Naive thymus-derived CD4-positive, alpha-beta T cell (primary cell): ENCODE measurements at regions of chr1 and their contacts with region 1.

Region 1: GRCh38 chr1:109112652-109113285 is 1.1 kb upstream of the ELAPOR1 start:
- DNase-seq: peak; percentile 75 to 93 (median 85)
- ATAC-seq: peak; percentile 75
- H3K4me3 ChIP-seq: peak overlapping the region; percentile 68
- H3K4me3 Mint-ChIP-seq: peak overlapping the region; percentile 78 to 93 (median 88)
- H3K27ac ChIP-seq: peak overlapping the region; percentile 68
- H3K27ac Mint-ChIP-seq: peak overlapping the region; percentile 84 to 96 (median 92)
- H3K4me1 ChIP-seq: peaks cover 16 to 21% of the 10 kb centered on the region in 2 donors
- H3K4me1 Mint-ChIP-seq: peaks cover 23 to 40% (median 28%) of the 10 kb centered on the region in 7 donors
- H3K27me3 ChIP-seq: no peaks in the 10 kb centered on the region
- H3K27me3 Mint-ChIP-seq: peaks cover 0 to 41% (median 0%) of the 10 kb centered on the region in 5 donors

Region 2: DNA sequence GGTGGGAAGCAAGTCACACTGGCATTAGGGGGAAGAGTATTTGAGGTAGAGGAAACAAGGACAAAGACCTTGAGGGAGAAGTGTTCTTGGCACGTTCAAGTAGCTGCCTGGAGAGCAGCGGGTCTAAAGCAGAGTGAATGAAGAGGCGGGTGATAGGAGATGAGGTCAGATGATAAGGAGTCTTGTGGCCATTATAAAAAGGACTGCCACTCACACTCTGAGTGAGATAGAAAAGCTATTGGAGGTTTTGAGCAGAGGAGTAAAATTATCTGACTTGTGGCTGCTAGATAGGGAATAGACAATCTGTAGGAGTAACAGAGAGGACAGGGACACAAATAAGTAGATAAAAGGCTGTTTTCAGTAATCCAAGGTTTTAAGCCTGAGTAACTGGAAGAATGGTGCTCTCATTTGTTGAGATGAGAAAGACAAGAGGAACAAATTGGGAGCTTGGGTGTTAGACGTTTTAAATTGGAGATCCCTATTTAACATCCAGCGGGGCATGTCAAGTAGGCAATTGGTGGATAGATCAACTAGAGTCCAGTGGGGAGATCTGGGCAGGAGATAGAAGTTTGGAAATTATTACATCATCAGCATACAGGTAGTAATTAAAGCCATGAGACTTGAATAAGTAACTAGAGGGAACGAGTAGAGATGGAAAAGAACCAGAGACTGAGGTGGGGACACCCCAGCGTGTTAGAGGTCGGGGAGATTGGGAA is 495.6 kb before region 1 on chr1:
- CTCF ChIA-PET with region 1: no interaction called
- POLR2A ChIA-PET with region 1: no interaction called
- intact Hi-C with region 1: no loop called
- DNase-seq: no peak
- ATAC-seq: no peak
- H3K4me3 ChIP-seq: no peak overlapping the region
- H3K4me3 Mint-ChIP-seq: no peak overlapping the region
- H3K27ac ChIP-seq: no peak overlapping the region
- H3K27ac Mint-ChIP-seq: no peak overlapping the region
- H3K4me1 ChIP-seq: no peaks in the 10 kb centered on the region
- H3K4me1 Mint-ChIP-seq: no peaks in the 10 kb centered on the region
- H3K27me3 ChIP-seq: no peaks in the 10 kb centered on the region
- H3K27me3 Mint-ChIP-seq: no peaks in the 10 kb centered on the region

Region 3: GRCh38 chr1:108828022-108828961 is 284.5 kb before region 1 on chr1:
- CTCF ChIA-PET with region 1: interaction called, 32 read pairs
- POLR2A ChIA-PET with region 1: interaction called, 3 read pairs
- intact Hi-C with region 1: loop called in 1 of 2 experiments (anchors 1 kb)
- DNase-seq: peak; percentile 37 to 62 (median 46)
- ATAC-seq: peak; percentile 61
- H3K4me3 ChIP-seq: no peak overlapping the region
- H3K4me3 Mint-ChIP-seq: no peak overlapping the region
- H3K27ac ChIP-seq: no peak overlapping the region
- H3K27ac Mint-ChIP-seq: no peak overlapping the region
- H3K4me1 ChIP-seq: no peaks in the 10 kb centered on the region
- H3K4me1 Mint-ChIP-seq: peaks cover 0 to 9% (median 0%) of the 10 kb centered on the region in 7 donors
- H3K27me3 ChIP-seq: peaks cover 0 to 3% of the 10 kb centered on the region in 2 donors
- H3K27me3 Mint-ChIP-seq: peaks cover 0 to 12% (median 0%) of the 10 kb centered on the region in 5 donors

Region 4: DNA sequence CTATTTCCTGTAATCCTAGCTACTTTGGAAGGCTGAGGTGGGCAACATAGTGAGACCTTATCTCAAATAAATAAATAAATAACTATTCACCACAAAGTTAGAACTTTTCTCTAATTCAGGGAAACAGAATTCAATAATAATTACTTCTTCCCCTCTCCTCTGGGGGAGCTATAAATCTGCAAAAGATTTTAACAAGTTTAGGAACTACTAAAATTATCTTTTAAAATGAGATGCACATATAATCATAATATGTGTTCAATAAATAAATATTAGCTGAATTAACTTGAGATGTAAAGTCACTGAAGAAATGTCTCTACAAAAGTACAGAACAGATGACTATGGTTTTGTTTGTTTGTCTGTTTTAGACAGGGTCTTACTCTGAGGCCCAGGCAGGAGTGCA is 84.9 kb before region 1 on chr1:
- CTCF ChIA-PET with region 1: interaction called, 7 read pairs
- POLR2A ChIA-PET with region 1: no interaction called
- intact Hi-C with region 1: loop called in 1 of 2 experiments (anchors 2 kb)
- DNase-seq: peak in 1 of 9 donors; percentile 14
- ATAC-seq: no peak
- H3K4me3 ChIP-seq: no peak overlapping the region
- H3K4me3 Mint-ChIP-seq: no peak overlapping the region
- H3K27ac ChIP-seq: no peak overlapping the region
- H3K27ac Mint-ChIP-seq: no peak overlapping the region
- H3K4me1 ChIP-seq: no peaks in the 10 kb centered on the region
- H3K4me1 Mint-ChIP-seq: peaks cover 0 to 4% (median 0%) of the 10 kb centered on the region in 7 donors
- H3K27me3 ChIP-seq: no peaks in the 10 kb centered on the region
- H3K27me3 Mint-ChIP-seq: no peaks in the 10 kb centered on the region

Region 5: GRCh38 chr1:109075531-109076490 is 37.0 kb before region 1 on chr1 and contains the start of gene TAF13:
- CTCF ChIA-PET with region 1: no interaction called
- POLR2A ChIA-PET with region 1: interaction called, 6 read pairs
- intact Hi-C with region 1: loop called (anchors 1 kb)
- DNase-seq: peak; percentile 75 to 89 (median 84)
- ATAC-seq: peak; percentile 100
- H3K4me3 ChIP-seq: peak within 1 kb of the TSS; percentile 80
- H3K4me3 Mint-ChIP-seq: peak within 1 kb of the TSS; percentile 89 to 99 (median 98)
- H3K27ac ChIP-seq: peak within 1 kb of the TSS; percentile 92
- H3K27ac Mint-ChIP-seq: peak within 1 kb of the TSS; percentile 95 to 100 (median 99)
- H3K4me1 ChIP-seq: peaks cover 5 to 8% of the 10 kb centered on the region in 2 donors
- H3K4me1 Mint-ChIP-seq: peaks cover 13 to 28% (median 20%) of the 10 kb centered on the region in 7 donors
- H3K27me3 ChIP-seq: no peaks in the 10 kb centered on the region
- H3K27me3 Mint-ChIP-seq: no peaks in the 10 kb centered on the region
- total RNA-seq, gene TAF13: 11.0 to 23.6 (median 17.6) TPM

Region 6: GRCh38 chr1:109099938-109100773 is 12.6 kb before region 1 on chr1:
- CTCF ChIA-PET with region 1: interaction called, 39 read pairs
- POLR2A ChIA-PET with region 1: interaction called, 89 read pairs
- intact Hi-C with region 1: loop called (anchors 1 kb)
- DNase-seq: peak; percentile 90 to 98 (median 97)
- ATAC-seq: peak; percentile 98
- H3K4me3 ChIP-seq: peak overlapping the region; percentile 80
- H3K4me3 Mint-ChIP-seq: peak overlapping the region; percentile 93 to 99 (median 98)
- H3K27ac ChIP-seq: peak overlapping the region; percentile 88
- H3K27ac Mint-ChIP-seq: peak overlapping the region; percentile 92 to 99 (median 96)
- H3K4me1 ChIP-seq: peaks cover 0 to 5% of the 10 kb centered on the region in 2 donors
- H3K4me1 Mint-ChIP-seq: peaks cover 5 to 22% (median 13%) of the 10 kb centered on the region in 7 donors
- H3K27me3 ChIP-seq: no peaks in the 10 kb centered on the region
- H3K27me3 Mint-ChIP-seq: peaks cover 0 to 2% (median 0%) of the 10 kb centered on the region in 5 donors

Region 7: GRCh38 chr1:109193653-109194590 is 81.2 kb after region 1 on chr1:
- CTCF ChIA-PET with region 1: interaction called, 4 read pairs
- POLR2A ChIA-PET with region 1: no interaction called
- intact Hi-C with region 1: loop called (anchors 1 to 5 kb)
- DNase-seq: peak in 7 of 9 donors; percentile 25 to 68 (median 42)
- ATAC-seq: peak; percentile 81
- H3K4me3 ChIP-seq: no peak overlapping the region
- H3K4me3 Mint-ChIP-seq: no peak overlapping the region
- H3K27ac ChIP-seq: no peak overlapping the region
- H3K27ac Mint-ChIP-seq: peak overlapping the region in 1 of 9 donors; percentile 76
- H3K4me1 ChIP-seq: peaks cover 0 to 1% of the 10 kb centered on the region in 2 donors
- H3K4me1 Mint-ChIP-seq: peaks cover 2 to 18% (median 5%) of the 10 kb centered on the region in 7 donors
- H3K27me3 ChIP-seq: no peaks in the 10 kb centered on the region
- H3K27me3 Mint-ChIP-seq: no peaks in the 10 kb centered on the region

Region 8: DNA sequence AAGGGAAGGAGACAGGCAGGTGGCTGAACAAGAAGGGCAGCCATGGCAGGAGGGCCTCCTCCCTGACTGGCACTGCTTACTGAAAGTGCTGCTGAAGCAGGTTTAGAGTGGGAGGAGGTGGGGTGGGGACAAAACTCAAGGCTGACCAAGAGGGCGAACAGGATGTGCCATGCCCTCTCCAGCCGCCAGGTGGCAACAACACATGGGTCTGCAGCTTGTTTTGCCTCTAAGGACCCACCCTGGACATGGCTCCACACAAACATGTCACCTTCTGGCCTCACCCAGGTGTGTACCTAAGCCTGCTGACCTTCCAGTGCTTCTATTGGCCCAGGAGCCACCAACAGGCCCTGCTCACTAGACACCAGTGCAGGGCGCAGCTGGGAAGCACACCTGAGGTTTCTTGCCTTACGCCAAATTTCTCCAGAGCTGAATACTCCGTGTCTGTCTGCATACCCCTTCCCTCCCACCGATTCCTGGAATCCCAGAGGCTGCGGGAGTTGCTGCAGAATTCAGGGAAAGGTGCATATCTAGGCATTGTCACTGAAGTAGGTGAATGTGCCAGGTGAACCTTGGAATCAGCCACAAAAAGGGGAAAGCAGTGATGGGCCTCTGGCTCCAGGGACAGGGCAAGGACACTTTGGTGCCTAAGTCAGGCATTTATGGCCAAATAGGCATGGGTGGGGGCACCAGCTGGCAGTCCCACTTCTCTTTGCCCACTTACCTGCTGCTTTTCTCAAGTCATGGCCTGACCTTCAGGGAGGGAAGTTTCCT is 164.8 kb after region 1 on chr1:
- CTCF ChIA-PET with region 1: no interaction called
- POLR2A ChIA-PET with region 1: no interaction called
- intact Hi-C with region 1: no loop called
- DNase-seq: peak in 7 of 9 donors; percentile 20 to 72 (median 35)
- ATAC-seq: peak; percentile 77
- H3K4me3 ChIP-seq: no peak overlapping the region
- H3K4me3 Mint-ChIP-seq: no peak overlapping the region
- H3K27ac ChIP-seq: no peak overlapping the region
- H3K27ac Mint-ChIP-seq: peak overlapping the region in 1 of 9 donors; percentile 44
- H3K4me1 ChIP-seq: peaks cover 3% of the 10 kb centered on the region in 2 donors
- H3K4me1 Mint-ChIP-seq: peaks cover 0 to 26% (median 10%) of the 10 kb centered on the region in 7 donors
- H3K27me3 ChIP-seq: no peaks in the 10 kb centered on the region
- H3K27me3 Mint-ChIP-seq: no peaks in the 10 kb centered on the region